ENCODE measurements at regions of chr22 and their contacts with region 1.

Region 1: DNA sequence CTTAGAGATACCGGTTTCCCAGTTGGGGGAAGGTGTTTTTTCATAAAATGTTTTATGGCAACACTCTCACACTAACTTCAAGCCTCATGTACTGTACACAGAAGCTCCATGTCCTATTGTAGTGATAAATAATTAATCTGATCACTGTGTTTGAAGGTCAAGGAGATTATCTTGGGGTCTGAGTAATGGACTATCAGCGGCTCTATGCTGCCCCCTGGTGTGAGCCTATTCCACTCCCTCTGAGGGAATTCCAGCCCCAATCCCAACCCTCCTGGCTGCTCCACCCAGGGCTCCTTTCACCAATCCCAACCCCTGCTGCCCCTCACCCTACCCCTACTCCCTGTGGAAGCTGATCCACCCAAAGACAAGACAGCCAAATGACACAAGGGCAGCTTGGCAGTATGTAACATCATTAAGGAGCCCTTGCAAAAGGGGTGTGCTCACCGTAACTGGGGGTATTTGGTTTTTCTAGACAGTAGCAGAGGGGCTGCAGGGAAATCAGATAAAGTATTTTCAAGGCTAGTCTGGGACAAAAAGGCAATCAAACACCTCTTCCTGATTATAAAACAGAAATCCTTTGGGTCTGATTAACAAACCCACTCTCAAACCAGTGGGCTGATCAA is 22.3 kb downstream of the HPS4 start:
- DNase-seq: no peak
- H3K4me3 ChIP-seq: no peak overlapping the region
- CTCF ChIP-seq: peak; percentile 75

Region 2: GRCh38 chr22:26321469-26321913 is 139.8 kb before region 1 on chr22:
- CTCF ChIA-PET with region 1: no interaction called
- POLR2A ChIA-PET with region 1: no interaction called
- DNase-seq: peak; percentile 90
- H3K4me3 ChIP-seq: no peak overlapping the region
- CTCF ChIP-seq: peak; percentile 7

Region 3: DNA sequence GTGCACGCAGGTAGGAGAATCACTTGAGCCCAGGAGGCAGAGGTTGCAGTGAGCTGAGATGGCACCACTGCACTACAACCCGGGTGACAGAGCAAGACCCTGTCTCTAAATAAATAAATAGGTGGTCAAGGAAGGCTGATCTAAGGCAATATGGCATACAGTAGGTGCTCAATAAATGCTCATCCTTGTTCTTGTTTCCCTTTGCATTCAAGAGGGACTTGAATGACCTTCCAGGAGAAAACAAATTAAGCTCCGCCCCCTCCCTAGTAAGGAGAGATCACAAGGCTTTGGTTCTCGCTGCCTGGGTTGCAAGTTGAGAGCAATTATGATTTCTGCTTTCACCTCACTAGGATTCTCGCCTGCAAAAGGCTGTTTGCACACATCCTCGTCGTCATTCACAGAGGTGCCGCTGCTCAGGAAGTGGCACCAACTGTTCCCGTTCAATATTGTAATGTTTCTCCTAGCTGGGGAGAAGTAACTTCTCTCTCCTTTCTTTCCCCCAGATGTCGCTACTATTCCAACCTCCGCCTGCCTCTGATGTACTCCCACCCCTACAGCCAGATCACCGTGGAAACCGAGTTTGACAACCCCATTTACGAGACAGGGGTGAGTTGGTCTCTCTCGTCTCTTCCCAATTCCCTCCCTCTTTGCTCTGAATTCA is 84.0 kb before region 1 on chr22:
- CTCF ChIA-PET with region 1: interaction called, 13 read pairs
- POLR2A ChIA-PET with region 1: no interaction called
- DNase-seq: no peak
- H3K4me3 ChIP-seq: no peak overlapping the region
- CTCF ChIP-seq: no peak

Region 4: GRCh38 chr22:26398741-26399153 is 62.6 kb before region 1 on chr22:
- CTCF ChIA-PET with region 1: interaction called, 399 read pairs
- POLR2A ChIA-PET with region 1: no interaction called
- DNase-seq: peak; percentile 23
- H3K4me3 ChIP-seq: no peak overlapping the region
- CTCF ChIP-seq: peak; percentile 75

Region 5: DNA sequence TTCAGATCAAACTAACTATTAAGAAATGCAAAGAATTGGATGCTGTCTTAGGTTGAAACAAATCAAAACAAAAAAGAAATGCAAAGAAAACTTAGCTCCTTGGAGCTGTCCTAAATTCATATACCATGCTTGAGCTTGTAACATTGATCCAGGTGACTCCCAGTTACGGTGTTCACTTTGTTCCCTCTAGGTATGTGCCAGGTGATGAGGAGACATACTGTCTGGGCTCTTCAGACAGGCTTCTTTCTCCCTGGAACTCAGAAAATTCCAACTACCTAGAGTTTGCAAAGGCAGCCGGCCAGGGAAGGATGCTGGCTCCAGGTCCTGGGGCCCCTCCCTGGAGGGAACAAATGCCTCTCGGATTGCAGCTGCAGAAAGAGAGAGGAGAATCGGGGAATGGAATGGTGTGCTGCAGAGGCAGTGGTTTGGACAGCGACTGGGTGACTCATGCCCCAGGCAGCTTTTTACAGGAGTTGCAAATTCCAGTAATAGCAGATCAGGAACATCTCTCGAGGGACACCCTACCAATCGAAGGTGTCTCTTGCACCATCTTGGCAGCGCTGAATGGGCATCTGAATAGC is 44.5 kb before region 1 on chr22:
- CTCF ChIA-PET with region 1: interaction called, 39 read pairs
- POLR2A ChIA-PET with region 1: no interaction called
- DNase-seq: peak; percentile 34
- H3K4me3 ChIP-seq: no peak overlapping the region
- CTCF ChIP-seq: no peak

Region 6: DNA sequence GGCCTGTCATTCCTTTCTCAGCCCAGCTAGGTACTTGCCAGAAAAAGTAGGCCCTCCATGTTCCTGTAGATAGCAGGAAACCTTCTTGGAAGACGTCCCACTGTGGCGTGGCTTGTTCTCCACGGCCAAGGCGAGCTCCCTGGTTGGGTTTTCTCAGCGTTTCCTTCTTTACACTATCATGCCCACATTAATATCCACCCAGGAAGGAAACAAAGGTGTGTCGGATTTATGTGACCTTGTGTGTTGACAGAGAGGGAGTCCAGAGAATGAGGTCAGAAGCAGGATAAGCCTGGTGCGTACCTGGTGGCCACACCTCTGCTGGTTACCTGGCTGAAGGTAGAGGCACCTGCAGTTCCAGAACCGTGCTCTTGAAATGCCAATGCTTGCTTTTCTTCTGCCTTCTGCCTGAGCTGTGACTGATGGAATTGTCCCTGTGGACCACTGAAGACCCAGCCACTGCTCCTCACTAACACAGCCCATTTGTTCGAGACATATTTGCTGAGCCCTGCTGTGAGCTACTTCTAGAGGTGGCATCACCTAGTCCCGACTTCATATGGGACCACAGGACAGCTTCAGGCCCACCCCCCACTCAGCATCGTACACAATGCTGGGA is 24.3 kb before region 1 on chr22:
- CTCF ChIA-PET with region 1: interaction called, 86 read pairs
- POLR2A ChIA-PET with region 1: no interaction called
- DNase-seq: no peak
- H3K4me3 ChIP-seq: no peak overlapping the region
- CTCF ChIP-seq: no peak

Region 7: GRCh38 chr22:26471522-26471921 is 10.2 kb after region 1 on chr22:
- CTCF ChIA-PET with region 1: interaction called, 68 read pairs
- POLR2A ChIA-PET with region 1: interaction called, 3 read pairs
- DNase-seq: peak; percentile 66
- H3K4me3 ChIP-seq: no peak overlapping the region
- CTCF ChIP-seq: no peak

Region 8: DNA sequence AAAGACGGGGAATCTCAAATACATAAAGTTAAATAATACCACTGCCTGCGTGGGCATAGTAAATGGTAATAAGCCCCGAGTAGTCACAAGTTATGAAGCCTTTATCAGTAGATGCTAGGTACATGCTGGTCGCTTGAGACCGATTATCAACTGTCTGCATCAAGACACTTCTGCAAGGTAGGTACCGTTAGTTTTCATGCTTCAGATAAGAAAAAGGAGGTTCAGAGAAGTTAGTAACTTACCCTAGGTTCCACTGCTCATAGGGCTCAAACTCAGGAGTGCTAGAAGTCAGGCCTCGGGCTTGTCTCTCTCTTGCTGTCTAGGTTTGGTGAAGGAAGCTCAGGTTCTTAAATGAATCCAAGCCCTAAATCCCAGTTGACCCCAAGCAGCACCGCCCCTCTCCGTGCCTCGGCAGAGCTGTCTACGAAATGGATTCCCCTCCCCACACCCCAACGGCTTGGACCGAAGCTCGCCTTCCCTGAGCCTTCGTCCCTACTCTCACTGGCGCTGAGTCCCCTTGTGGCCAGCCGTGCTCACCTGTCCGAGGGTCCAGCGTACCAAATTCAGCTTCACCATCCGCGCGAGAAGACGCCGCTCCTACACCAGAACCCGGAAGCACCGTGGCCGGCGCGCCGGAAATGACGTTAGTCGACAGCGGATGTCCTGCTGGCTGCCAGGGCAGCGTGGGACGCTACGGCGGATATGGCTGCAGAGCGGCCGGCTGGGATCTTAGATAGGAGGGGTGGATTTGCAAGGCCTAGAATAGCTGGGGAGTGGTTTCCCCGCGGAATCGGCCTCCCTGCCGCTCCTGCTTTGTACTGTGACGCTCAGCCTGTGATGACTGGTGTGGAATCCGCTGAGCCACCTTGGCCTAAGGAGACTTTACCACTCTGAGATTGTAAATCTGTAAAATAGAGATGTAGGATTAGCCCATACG is 50.8 kb after region 1 on chr22 and contains the start of gene TFIP11:
- CTCF ChIA-PET with region 1: no interaction called
- POLR2A ChIA-PET with region 1: no interaction called
- DNase-seq: peak; percentile 37
- H3K4me3 ChIP-seq: peak within 1 kb of the TSS; percentile 100
- CTCF ChIP-seq: no peak

Region 9: GRCh38 chr22:26665813-26666231 is 204.5 kb after region 1 on chr22:
- CTCF ChIA-PET with region 1: interaction called, 20 read pairs
- POLR2A ChIA-PET with region 1: no interaction called
- DNase-seq: peak; percentile 52
- H3K4me3 ChIP-seq: no peak overlapping the region
- CTCF ChIP-seq: no peak

Region 10: DNA sequence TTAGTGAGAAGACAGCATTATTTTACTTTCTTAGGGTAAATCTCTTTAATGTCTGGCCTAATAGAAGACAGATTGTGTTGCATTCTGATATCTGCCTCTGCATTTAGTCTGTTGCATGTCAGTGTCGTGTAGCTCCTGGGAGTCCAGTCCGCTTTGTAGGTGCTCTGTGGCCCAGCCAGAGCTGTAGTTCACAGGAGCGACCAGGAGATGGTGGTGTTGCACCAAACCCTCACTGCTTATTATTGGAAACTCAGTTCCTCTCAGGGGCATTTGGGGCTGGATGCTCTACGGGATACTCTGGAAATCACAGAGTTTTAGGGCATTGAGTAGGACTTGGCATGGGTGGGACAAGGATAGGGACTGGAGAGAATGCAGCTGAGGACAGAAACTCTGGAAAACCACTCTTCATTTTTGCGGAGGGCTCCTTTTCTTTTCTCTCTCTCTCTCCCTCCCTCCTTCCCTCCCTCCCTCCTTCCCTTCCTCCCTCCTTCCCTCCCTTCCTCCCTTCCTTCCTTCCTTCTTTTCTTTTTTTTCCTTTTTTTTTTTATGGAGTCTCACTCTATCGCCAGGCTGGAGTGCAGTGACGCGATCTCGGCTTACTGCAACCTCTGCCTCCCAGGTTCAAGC is 217.8 kb after region 1 on chr22:
- CTCF ChIA-PET with region 1: no interaction called
- POLR2A ChIA-PET with region 1: no interaction called
- DNase-seq: no peak
- H3K4me3 ChIP-seq: no peak overlapping the region
- CTCF ChIP-seq: peak; percentile 87

Measured in AG04449 (cell line).